ENCODE measurements at regions of chr12 and their contacts with region 1.

Region 1: DNA sequence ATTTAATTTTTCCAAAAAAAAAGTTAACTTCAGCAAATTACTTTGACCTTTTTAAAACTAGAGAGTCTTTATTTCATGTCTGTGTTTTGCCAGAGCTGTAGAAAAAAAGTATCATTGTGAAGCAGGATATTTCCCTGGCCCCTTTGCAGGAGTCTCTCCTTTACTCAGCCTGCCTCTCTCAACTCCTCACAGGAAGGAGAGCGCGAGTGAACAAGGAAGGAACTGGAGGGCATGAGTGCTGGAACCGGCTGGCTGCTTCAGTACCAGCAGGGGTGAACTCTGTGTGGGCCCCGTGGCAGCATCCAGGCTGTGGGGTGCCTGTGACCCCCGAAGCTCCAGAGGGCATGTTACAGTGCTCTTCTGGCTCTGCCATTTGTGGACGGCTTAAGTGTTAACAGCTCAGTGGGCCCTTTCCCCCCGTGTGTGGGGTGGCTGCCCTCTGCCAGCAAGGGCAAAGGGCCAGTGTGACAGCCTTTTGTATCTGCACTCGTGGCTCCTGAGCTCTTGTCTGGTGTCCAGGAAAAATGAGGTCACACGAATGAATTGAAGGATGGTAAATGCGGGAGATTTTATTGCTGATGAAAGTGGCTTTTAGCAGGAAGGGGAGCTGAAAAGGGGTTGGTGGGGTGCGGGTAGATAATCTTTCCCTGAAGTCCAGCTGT is 76.6 kb upstream of the KCNH3 start:
- H3K4me3 Mint-ChIP-seq: no peak overlapping the region
- H3K27ac Mint-ChIP-seq: no peak overlapping the region
- H3K4me1 Mint-ChIP-seq: no peaks in the 10 kb centered on the region
- H3K27me3 Mint-ChIP-seq: no peaks in the 10 kb centered on the region

Region 2: DNA sequence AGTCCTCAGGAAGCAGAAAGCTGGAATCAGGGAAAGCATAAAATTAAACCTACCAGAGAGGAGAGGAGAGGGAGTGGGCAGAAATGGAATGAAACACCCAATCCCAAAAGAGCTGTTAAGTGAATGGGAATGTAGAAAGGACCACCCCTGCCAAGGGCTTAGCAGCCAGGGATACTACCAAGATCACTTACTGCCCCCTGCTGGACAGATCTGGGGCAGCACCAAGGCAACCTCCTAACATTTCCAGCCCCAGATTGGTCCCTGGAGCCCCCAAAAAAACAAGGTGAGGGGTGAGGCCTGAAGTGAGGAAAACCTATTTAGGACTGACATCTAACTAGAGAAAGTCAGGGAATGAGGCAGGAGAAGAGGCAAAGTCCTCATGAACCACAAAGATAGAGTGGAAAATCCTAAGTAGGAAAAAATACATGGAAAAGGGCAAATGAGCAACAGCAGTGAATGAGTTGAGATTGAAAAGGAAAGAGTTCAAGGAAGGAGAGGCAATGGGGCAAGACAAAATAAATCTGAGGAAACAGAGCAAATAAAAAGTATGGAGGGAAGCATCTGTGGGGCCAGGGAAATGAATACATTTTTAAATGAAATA is 525.7 kb before region 1 on chr12:
- intact Hi-C with region 1: no loop called
- H3K4me3 Mint-ChIP-seq: no peak overlapping the region
- H3K27ac Mint-ChIP-seq: no peak overlapping the region
- H3K4me1 Mint-ChIP-seq: peaks cover 61% of the 10 kb centered on the region
- H3K27me3 Mint-ChIP-seq: no peaks in the 10 kb centered on the region

Region 3: DNA sequence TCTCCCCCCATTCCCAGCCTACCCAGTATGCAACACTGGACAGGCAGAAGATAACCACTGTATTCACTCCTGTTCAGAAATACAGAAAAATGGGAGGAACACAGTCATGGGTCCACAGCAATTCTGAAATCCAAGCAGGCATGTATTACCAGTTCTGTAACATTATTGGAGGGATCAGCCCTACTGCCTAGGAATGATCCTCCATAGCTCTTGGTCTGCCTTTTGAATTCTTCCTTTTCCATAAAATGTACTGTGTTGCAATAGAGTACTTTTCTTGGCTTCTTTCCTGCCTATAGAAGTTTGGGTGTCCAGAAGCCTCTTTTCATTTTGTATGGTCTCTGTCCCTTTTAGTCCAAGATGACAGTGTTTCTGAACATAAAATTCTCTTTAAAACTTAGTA is 48.4 kb before region 1 on chr12:
- intact Hi-C with region 1: loop called (anchors 10 kb)
- H3K4me3 Mint-ChIP-seq: no peak overlapping the region
- H3K27ac Mint-ChIP-seq: no peak overlapping the region
- H3K4me1 Mint-ChIP-seq: peaks cover 11% of the 10 kb centered on the region
- H3K27me3 Mint-ChIP-seq: no peaks in the 10 kb centered on the region

Measured in dendritic cell treated with granulocyte-macrophage colony-stimulating factor and Interleukin-4, amounts not matched to agents 40 ng/mL and 50 ng/mL, for 4 days (primary cell).